ENCODE measurements at regions of chr5 and their contacts with region 1.

Region 1: GRCh38 chr5:112848116-112848811 is 12.8 kb upstream of the SRP19 start:
- DNase-seq: peak; percentile 78
- ATAC-seq: peak; percentile 97
- H3K4me3 ChIP-seq: no peak overlapping the region; the same call in 1 of the 2 replicates
- H3K27ac ChIP-seq: no peak overlapping the region
- H3K4me1 ChIP-seq: no peaks in the 10 kb centered on the region
- H3K27me3 ChIP-seq: no peaks in the 10 kb centered on the region
- CTCF ChIP-seq: peak; percentile 67
- POLR2A ChIP-seq: no peak
- RAD21 ChIP-seq: peak; percentile 48; the same call in 1 of the 2 replicates

Region 2: GRCh38 chr5:112784726-112785125 is 63.5 kb before region 1 on chr5:
- CTCF ChIA-PET with region 1: interaction called, 5 read pairs
- POLR2A ChIA-PET with region 1: no interaction called
- dilution Hi-C with region 1: no loop called
- in situ Hi-C with region 1: no loop called
- intact Hi-C with region 1: loop called (anchors 2 kb)
- DNase-seq: peak; percentile 55
- ATAC-seq: peak; percentile 24; the same call in 1 of the 2 replicates
- H3K4me3 ChIP-seq: no peak overlapping the region
- H3K27ac ChIP-seq: peak overlapping the region; percentile 21; the same call in 1 of the 2 replicates
- H3K4me1 ChIP-seq: peaks cover 4% of the 10 kb centered on the region
- H3K27me3 ChIP-seq: no peaks in the 10 kb centered on the region
- CTCF ChIP-seq: no peak
- POLR2A ChIP-seq: no peak
- RAD21 ChIP-seq: no peak

Measured in IMR-90 (cell line).